ENCODE measurements at regions of chrX and their contacts with region 1.

Region 1: DNA sequence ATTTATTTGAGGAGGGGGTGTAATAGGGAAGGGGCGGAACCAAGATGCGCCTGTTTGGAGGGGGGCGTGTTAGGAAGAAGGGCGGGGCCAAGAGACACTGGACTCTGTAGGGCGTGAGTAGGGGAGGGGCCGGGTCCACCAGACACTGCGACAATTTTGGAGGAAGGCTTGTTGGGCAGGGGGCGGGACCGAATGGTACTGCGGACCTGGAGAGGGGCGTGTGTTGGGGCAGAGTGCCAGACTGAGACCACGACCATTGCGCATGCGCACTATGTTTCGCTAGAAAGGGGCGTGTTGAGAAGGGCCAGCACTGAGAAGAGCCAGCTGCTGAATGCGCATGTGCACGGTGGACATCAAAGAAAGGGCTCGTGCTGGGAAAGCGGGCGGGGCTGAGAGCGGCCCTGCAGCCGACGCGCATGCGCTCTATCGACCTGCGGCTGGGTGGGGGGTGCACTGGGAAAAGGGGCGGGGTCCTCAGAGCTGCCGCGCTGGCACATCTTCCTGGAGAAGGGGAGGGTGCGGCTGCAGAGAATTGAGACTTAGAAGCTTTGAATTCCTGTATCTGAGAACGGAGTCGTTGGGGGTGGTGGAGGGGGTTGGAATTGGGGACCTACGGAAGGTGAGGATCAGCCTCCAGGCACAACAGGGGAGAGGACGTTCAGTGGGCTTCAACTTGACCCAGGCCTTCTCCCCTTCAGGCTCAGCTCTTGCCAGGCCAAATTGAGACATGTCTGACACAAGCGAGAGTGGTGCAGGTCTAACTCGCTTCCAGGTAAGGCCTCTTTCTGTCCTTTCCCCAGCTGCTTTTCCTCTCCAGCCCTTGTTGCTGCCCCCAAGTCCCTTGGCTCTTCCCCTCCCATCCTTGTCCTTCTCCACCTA is 1.3 kb downstream of the MAGED2 start:
- DNase-seq: peak; percentile 92 to 96 (median 94)
- ATAC-seq: peak; percentile 88 to 93 (median 90)
- H3K4me3 ChIP-seq: peak overlapping the region; percentile 46 to 99 (median 71)
- H3K27ac ChIP-seq: peak overlapping the region; percentile 78 to 98 (median 89)
- H3K4me1 ChIP-seq: peaks cover 0 to 18% (median 7%) of the 10 kb centered on the region in 12 donors
- H3K27me3 ChIP-seq: no peaks in the 10 kb centered on the region
- CTCF ChIP-seq: no peak
- POLR2A ChIP-seq: no peak

Region 2: DNA sequence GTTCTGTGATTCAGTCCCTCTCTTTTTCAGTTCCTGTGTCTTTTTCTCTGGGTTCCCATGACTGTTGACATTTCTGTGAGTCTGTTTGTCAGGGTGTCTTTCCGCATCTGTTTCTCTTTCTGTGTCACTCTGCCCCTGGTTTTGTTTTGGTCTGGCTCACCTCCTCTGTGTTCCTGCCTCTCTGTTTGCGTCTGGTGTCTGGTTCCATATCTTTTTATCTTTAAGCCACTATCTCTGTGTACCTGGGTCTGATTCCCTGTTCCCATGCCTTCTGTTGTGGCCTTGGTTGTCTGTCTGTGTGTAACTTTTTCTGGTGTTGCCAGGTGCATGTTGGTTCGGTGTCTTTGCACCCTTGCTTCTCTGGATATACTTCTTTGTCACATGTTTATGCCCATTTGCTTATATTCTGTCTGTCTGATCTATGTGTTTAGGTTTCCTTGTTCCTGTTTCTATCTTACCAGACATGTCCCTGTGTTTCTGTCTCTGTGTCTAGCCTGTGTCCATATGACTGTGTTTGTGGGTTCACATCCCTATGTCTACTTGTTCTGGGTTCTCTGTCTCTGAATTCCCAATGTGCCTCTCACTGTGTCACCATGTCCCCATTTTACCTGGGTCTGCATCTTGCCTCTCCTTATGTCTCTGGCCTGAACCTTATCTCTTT is 61.0 kb before region 1 on chrX:
- intact Hi-C with region 1: no loop called
- DNase-seq: no peak
- ATAC-seq: no peak
- H3K4me3 ChIP-seq: no peak overlapping the region
- H3K27ac ChIP-seq: no peak overlapping the region
- H3K4me1 ChIP-seq: no peaks in the 10 kb centered on the region
- H3K27me3 ChIP-seq: peaks cover 0 to 3% (median 0%) of the 10 kb centered on the region in 9 donors
- CTCF ChIP-seq: no peak
- POLR2A ChIP-seq: no peak

Region 3: GRCh38 chrX:54927409-54927808 is 118.6 kb after region 1 on chrX:
- intact Hi-C with region 1: no loop called
- DNase-seq: no peak
- ATAC-seq: no peak
- H3K4me3 ChIP-seq: no peak overlapping the region
- H3K27ac ChIP-seq: no peak overlapping the region
- H3K4me1 ChIP-seq: peaks cover 0 to 1% (median 0%) of the 10 kb centered on the region in 12 donors
- H3K27me3 ChIP-seq: no peaks in the 10 kb centered on the region
- CTCF ChIP-seq: no peak
- POLR2A ChIP-seq: no peak

Region 4: GRCh38 chrX:54999717-55000598 is 191.1 kb after region 1 on chrX and contains the start of gene APEX2:
- intact Hi-C with region 1: loop called in 2 of 10 experiments (anchors 10 kb)
- DNase-seq: peak; percentile 89 to 94 (median 94)
- ATAC-seq: peak; percentile 97 to 98 (median 98)
- H3K4me3 ChIP-seq: peak within 1 kb of the TSS; percentile 19 to 95 (median 66)
- H3K27ac ChIP-seq: peak within 1 kb of the TSS; percentile 68 to 95 (median 86)
- H3K4me1 ChIP-seq: peaks cover 0 to 17% (median 4%) of the 10 kb centered on the region in 12 donors
- H3K27me3 ChIP-seq: no peaks in the 10 kb centered on the region
- CTCF ChIP-seq: no peak
- POLR2A ChIP-seq: peak in 1 of 2 donors; percentile 70
- total RNA-seq, gene APEX2: 6.8 to 12.4 (median 8.6) TPM

Region 5: GRCh38 chrX:55260806-55261205 is 452.0 kb after region 1 on chrX:
- intact Hi-C with region 1: no loop called
- DNase-seq: no peak
- ATAC-seq: no peak
- H3K4me3 ChIP-seq: no peak overlapping the region
- H3K27ac ChIP-seq: no peak overlapping the region
- H3K4me1 ChIP-seq: no peaks in the 10 kb centered on the region
- H3K27me3 ChIP-seq: peaks cover 0 to 14% (median 0%) of the 10 kb centered on the region in 9 donors
- CTCF ChIP-seq: no peak
- POLR2A ChIP-seq: no peak

Measured in heart left ventricle (tissue), 16 donors.